Panc1 (cell line): ENCODE measurements at regions of chr14 and their contacts with region 1.

Region 1: GRCh38 chr14:24398653-24399446 is at the start of gene NYNRIN:
- DNase-seq: no peak
- ATAC-seq: peak; percentile 70; the same call in 1 of the 2 replicates
- H3K4me3 ChIP-seq: peak within 1 kb of the TSS; percentile 23 to 33; a peak in 3 of 4 replicates
- H3K27ac ChIP-seq: no peak within 1 kb of the TSS
- H3K4me1 ChIP-seq: no peaks in the 10 kb centered on the region
- H3K27me3 ChIP-seq: peaks cover 3% of the 10 kb centered on the region; the same call in 1 of the 2 replicates
- CTCF ChIP-seq: no peak
- total RNA-seq, gene NYNRIN: 0.31 TPM

Region 2: DNA sequence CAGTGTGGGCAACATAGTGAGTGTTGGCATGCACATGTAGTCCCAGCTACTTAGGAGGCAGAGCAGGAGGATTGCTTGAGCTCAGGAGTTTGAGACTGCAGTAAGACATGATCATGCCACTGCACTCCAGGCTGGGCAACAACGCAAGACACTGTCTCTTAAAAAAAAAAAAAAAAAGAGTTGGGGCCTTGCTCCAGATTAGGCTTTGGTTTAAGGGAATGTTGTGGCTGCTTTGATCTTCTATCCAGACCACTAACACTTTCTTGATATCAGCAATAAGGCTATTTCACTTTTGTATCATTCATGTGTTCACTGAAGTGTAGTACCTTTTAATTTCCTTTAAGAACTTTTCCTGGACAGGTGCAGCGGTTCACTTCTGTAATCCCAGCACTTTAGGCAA is 271.2 kb before region 1 on chr14:
- CTCF ChIA-PET with region 1: no interaction called
- POLR2A ChIA-PET with region 1: interaction called, 16 read pairs
- in situ Hi-C with region 1: no loop called
- intact Hi-C with region 1: no loop called
- DNase-seq: no peak
- ATAC-seq: no peak
- H3K4me3 ChIP-seq: no peak overlapping the region
- H3K27ac ChIP-seq: no peak overlapping the region
- H3K4me1 ChIP-seq: no peaks in the 10 kb centered on the region
- H3K27me3 ChIP-seq: no peaks in the 10 kb centered on the region
- CTCF ChIP-seq: no peak

Region 3: DNA sequence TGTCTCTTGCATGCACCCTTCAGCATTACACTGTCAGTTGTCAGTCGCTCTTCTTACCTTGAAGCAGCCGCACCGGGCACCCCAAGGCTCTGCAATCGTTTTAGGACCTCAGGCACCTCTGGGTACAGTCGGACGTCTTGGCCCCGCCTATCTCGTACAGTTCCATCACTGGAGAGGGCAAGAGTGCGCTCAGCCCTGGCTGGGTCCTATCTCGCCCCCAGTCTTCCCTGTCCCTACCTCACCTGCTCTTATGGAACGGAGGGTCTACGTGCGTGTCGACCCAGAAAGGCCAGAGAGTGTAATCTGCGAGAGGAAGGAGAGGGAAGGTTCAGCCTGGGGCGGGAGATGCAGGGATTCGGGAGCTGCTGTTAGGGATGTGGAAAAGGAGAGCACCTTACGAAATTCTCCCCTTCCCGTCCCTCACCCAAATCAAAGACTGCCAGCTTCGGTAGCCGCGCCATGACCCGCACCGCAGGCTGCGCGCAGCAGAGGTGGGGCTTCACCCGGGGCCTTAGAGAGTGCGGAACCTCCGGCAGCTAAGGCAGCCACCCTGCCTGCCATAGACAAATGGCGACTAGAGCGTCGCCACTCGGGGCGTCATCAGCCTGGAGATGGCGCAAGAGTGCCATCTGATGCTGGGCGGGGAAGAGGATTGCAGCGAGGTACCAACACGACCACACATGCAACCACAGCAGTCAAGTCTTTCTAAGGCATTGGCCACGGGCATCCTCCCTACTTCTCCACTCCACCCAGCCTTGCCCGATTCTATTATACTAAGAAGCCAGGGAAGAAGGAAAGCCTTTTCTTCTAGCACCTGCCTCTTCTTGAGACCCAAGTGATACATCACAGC is 183.1 kb before region 1 on chr14 and contains the start of gene MDP1:
- CTCF ChIA-PET with region 1: interaction called, 11 read pairs
- POLR2A ChIA-PET with region 1: no interaction called
- in situ Hi-C with region 1: no loop called
- intact Hi-C with region 1: no loop called
- DNase-seq: no peak
- ATAC-seq: peak; percentile 86
- H3K4me3 ChIP-seq: peak within 1 kb of the TSS; percentile 74 to 77
- H3K27ac ChIP-seq: peak within 1 kb of the TSS; percentile 89
- H3K4me1 ChIP-seq: peaks cover 9% of the 10 kb centered on the region
- H3K27me3 ChIP-seq: no peaks in the 10 kb centered on the region
- CTCF ChIP-seq: peak; percentile 82
- total RNA-seq, gene MDP1: 8.9 TPM

Region 4: GRCh38 chr14:24241829-24242443 is 156.9 kb before region 1 on chr14:
- CTCF ChIA-PET with region 1: no interaction called
- POLR2A ChIA-PET with region 1: no interaction called
- in situ Hi-C with region 1: no loop called
- intact Hi-C with region 1: no loop called
- DNase-seq: peak; percentile 72
- ATAC-seq: peak; percentile 93
- H3K4me3 ChIP-seq: peak overlapping the region; percentile 77 to 91
- H3K27ac ChIP-seq: peak overlapping the region; percentile 93
- H3K4me1 ChIP-seq: peaks cover 12% of the 10 kb centered on the region
- H3K27me3 ChIP-seq: no peaks in the 10 kb centered on the region
- CTCF ChIP-seq: no peak

Region 5: DNA sequence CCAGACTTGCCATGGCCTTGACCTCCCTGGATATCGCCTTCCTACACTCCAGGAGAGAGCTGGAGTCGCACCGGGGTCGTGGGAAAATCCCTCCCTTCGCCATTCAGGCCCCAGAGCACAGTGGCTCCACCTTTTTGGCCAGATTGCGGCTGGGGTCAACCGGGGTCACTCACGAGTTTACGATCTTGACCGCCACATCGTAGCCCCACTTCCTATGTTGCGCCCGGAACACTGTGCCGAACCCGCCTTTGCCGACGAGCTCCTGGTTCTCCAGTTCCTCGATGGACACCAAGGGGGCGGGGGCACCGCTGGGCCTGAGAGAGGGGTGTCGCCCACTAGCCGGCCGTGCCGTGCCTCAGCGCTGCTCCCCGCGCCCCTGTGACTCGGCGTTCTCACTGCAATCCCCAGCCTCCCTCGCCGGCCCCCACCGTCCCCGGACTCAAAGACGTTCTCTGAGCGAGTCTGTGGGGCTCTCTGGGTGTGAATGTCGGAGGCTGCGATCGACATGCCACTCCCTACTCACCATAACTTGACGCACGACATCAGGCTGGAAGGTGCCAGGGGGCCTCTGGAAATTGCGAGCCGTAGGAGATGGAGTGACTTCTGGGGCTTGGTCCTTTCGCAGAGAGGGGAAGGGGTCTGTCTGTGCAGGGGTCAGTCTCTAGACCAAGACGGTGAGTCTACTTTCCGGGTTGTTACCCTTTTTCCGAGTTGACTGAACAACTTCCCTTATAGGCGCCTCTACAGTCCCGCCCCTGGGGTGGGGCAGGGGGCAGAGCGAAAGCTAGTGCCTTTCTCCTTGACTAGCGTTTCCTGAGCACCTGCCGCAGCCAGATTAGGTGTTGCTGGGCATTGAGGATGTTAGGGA is 59.3 kb before region 1 on chr14 and contains the start of gene RIPK3:
- CTCF ChIA-PET with region 1: no interaction called
- POLR2A ChIA-PET with region 1: interaction called, 19 read pairs
- in situ Hi-C with region 1: no loop called
- intact Hi-C with region 1: no loop called
- DNase-seq: no peak
- ATAC-seq: no peak
- H3K4me3 ChIP-seq: no peak within 1 kb of the TSS
- H3K27ac ChIP-seq: no peak within 1 kb of the TSS
- H3K4me1 ChIP-seq: no peaks in the 10 kb centered on the region
- H3K27me3 ChIP-seq: no peaks in the 10 kb centered on the region; the same call in 1 of the 2 replicates
- CTCF ChIP-seq: no peak
- total RNA-seq, gene RIPK3: not detected